ENCODE measurements at regions of chr6 and their contacts with region 1.

Region 1: GRCh38 chr6:37791156-37791919 is 28.2 kb upstream of the ZFAND3 start:
- DNase-seq: peak; percentile 92
- H3K4me3 Mint-ChIP-seq: no peak overlapping the region
- H3K27ac Mint-ChIP-seq: no peak overlapping the region
- H3K4me1 Mint-ChIP-seq: peaks cover 13% of the 10 kb centered on the region
- H3K27me3 Mint-ChIP-seq: peaks cover 9% of the 10 kb centered on the region

Region 2: GRCh38 chr6:37698261-37699137 is 92.8 kb before region 1 on chr6:
- intact Hi-C with region 1: loop called (anchors 5 kb)
- DNase-seq: peak; percentile 90
- H3K4me3 Mint-ChIP-seq: peak overlapping the region; percentile 97
- H3K27ac Mint-ChIP-seq: peak overlapping the region; percentile 93
- H3K4me1 Mint-ChIP-seq: peaks cover 26% of the 10 kb centered on the region
- H3K27me3 Mint-ChIP-seq: peaks cover 59% of the 10 kb centered on the region

Region 3: DNA sequence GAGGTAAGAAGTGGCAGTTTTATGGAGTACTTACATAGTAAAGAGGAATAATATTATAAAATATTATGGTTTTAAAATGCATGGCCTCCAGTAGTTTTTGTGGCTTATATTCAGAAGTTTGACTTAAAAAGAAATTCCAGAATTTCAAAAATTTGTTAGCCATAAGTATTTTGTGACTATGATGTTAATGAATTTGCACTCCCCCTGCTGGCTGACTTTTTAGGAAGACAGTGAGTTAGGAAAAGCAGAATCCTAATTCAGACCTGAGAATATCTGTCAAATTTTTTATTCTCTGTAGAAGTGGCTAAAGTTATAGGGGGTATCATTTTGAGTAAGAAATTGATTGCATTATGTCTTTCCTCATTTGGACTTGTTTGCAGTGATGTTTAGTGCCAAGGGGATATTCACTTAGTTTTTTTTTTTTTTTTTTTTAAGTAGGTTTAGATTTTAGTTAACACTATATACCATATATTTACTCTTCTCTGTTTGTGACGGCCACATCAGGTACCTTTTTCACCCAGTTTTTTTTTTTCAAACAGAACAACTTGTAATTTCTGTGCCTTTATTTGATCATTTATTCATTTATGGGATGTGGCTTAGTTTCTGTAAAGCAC is 69.0 kb after region 1 on chr6:
- intact Hi-C with region 1: loop called (anchors 2 kb)
- DNase-seq: peak; percentile 67
- H3K4me3 Mint-ChIP-seq: no peak overlapping the region
- H3K27ac Mint-ChIP-seq: no peak overlapping the region
- H3K4me1 Mint-ChIP-seq: peaks cover 31% of the 10 kb centered on the region
- H3K27me3 Mint-ChIP-seq: no peaks in the 10 kb centered on the region

Region 4: GRCh38 chr6:37990762-37991525 is 199.6 kb after region 1 on chr6:
- intact Hi-C with region 1: no loop called
- DNase-seq: no peak
- H3K4me3 Mint-ChIP-seq: no peak overlapping the region
- H3K27ac Mint-ChIP-seq: no peak overlapping the region
- H3K4me1 Mint-ChIP-seq: peaks cover 18% of the 10 kb centered on the region
- H3K27me3 Mint-ChIP-seq: no peaks in the 10 kb centered on the region

Region 5: DNA sequence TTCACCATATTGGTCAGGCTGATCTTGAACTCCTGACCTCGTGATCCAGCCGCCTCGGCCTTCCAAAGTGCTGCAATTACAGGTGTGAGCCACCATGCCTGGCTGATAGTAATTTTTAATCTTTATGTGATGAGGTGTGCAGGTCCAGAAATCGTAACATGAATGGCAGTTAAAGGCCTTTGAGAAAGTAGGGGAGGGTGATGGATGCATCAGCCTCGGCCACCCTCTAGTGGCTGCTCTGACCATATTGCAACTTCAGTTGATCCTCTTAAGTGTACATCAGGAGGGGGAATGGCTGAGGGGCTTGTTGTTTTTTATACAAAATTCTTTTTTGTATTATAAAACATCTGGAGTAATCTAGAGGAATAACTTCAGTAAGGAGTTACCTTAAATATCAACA is 221.2 kb after region 1 on chr6:
- intact Hi-C with region 1: loop called (anchors 1 kb)
- DNase-seq: peak; percentile 58
- H3K4me3 Mint-ChIP-seq: no peak overlapping the region
- H3K27ac Mint-ChIP-seq: no peak overlapping the region
- H3K4me1 Mint-ChIP-seq: peaks cover 6% of the 10 kb centered on the region
- H3K27me3 Mint-ChIP-seq: no peaks in the 10 kb centered on the region

Region 6: DNA sequence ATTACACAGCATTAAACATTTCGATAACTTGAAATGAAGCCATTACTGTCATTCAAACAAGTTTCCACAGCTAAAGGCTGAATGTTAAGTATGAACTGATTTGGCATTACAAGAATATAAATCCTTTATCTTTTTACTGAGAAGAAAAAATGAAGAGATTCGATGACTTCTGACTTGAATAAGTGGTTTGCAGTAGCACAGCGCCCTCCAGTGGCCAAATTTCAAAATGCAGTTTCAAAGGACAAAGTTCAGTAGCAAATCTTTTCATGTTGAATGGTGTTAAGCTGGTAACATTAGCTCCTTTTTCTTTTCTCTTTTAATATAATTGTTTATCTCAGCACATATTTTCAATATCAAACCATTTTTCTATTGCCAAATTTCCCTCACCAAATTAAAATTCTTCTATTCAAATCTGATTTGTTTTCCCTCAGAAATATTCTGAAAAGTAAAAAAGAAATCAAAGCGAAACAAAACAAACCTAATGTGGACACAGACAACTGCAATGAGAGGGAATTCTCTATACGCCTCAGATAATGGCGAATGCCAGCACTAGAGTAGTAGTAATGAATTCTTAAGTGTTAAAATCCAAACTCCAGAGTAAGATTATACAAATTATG is 702.7 kb after region 1 on chr6:
- intact Hi-C with region 1: loop called (anchors 5 kb)
- DNase-seq: peak; percentile 93
- H3K4me3 Mint-ChIP-seq: no peak overlapping the region
- H3K27ac Mint-ChIP-seq: no peak overlapping the region
- H3K4me1 Mint-ChIP-seq: peaks cover 4% of the 10 kb centered on the region
- H3K27me3 Mint-ChIP-seq: no peaks in the 10 kb centered on the region

Measured in activated CD4-positive, alpha-beta T cell treated with anti-CD3 and anti-CD28 coated beads, Interleukin-2, amount 10 ng/mL, durations not matched to agents 24 days and 14 days (primary cell).